MCF 10A (cell line): ENCODE measurements at regions of chr3 and their contacts with region 1.

Region 1: GRCh38 chr3:146189519-146190173 is 28.7 kb upstream of the PLOD2 start:
- DNase-seq: peak; percentile 75
- H3K4me3 Mint-ChIP-seq: peak overlapping the region; percentile 22
- H3K27ac Mint-ChIP-seq: no peak overlapping the region
- H3K4me1 Mint-ChIP-seq: peaks cover 21% of the 10 kb centered on the region
- H3K27me3 Mint-ChIP-seq: no peaks in the 10 kb centered on the region
- CTCF ChIP-seq: peak; percentile 48

Region 2: GRCh38 chr3:146058241-146058640 is 131.4 kb before region 1 on chr3:
- CTCF ChIA-PET with region 1: interaction called, 207 read pairs
- POLR2A ChIA-PET with region 1: interaction called, 3 read pairs
- intact Hi-C with region 1: no loop called
- DNase-seq: no peak
- H3K4me3 Mint-ChIP-seq: no peak overlapping the region
- H3K27ac Mint-ChIP-seq: no peak overlapping the region
- H3K4me1 Mint-ChIP-seq: no peaks in the 10 kb centered on the region
- H3K27me3 Mint-ChIP-seq: no peaks in the 10 kb centered on the region
- CTCF ChIP-seq: no peak

Region 3: DNA sequence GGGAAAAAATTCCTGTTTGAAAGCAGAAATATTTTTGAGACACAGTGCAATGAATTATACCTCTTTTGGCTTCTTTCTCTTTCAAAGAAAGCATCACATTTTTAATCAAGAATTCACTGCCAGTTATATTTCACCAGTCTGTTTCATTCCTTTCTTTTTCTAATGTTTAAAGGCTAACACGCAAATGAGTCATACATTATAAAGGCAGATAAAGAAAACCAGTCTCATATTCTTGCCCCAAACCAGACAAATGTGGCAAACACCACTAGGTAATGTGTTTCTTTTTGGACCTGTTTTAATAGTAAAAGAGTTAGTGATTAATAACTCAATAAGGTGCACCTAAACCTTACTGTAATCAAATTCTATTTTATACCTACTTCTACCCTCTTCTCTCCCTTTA is 112.5 kb before region 1 on chr3:
- CTCF ChIA-PET with region 1: interaction called, 33 read pairs
- POLR2A ChIA-PET with region 1: interaction called, 3 read pairs
- intact Hi-C with region 1: no loop called
- DNase-seq: no peak
- H3K4me3 Mint-ChIP-seq: no peak overlapping the region
- H3K27ac Mint-ChIP-seq: no peak overlapping the region
- H3K4me1 Mint-ChIP-seq: peaks cover 5% of the 10 kb centered on the region
- H3K27me3 Mint-ChIP-seq: no peaks in the 10 kb centered on the region
- CTCF ChIP-seq: no peak

Region 4: DNA sequence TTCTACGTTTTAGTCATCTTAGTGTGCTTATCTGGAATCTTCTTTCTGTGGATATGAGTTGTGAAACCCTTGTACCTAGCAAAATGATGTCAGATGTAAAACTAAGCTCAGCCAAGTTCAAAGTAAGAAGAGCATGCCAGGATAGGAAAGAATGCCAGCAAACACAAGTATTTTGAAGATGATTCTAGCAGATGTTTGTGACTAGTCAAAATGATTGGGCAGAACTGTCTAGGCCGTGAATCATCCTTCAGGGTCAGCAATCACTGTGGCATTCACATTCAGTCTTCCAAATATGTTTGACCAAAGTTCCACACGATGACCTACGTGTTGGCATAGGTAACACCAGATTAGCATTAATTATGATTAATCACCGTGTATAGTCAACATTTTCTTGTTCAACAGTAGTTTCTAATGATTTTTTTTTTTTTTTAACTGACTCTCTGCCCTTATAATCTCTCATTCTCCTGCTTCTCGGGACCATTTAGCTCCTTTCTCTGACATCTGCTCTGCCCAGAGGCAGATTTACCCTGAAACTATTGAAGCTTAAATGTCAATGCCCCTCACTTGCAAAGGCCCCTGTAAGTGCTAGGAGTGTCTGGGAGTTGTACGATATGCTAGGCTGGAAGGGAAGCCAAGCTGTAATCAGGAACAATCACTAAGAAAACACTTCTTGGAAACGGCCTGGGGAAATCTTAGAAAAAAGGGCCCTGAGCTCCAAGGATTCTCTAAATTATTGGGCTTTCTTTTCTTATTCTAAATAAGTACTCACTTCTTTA is 23.0 kb before region 1 on chr3:
- CTCF ChIA-PET with region 1: interaction called, 45 read pairs
- POLR2A ChIA-PET with region 1: interaction called, 26 read pairs
- intact Hi-C with region 1: no loop called
- DNase-seq: peak; percentile 89
- H3K4me3 Mint-ChIP-seq: peak overlapping the region; percentile 15
- H3K27ac Mint-ChIP-seq: peak overlapping the region; percentile 65
- H3K4me1 Mint-ChIP-seq: peaks cover 46% of the 10 kb centered on the region
- H3K27me3 Mint-ChIP-seq: no peaks in the 10 kb centered on the region
- CTCF ChIP-seq: no peak

Region 5: DNA sequence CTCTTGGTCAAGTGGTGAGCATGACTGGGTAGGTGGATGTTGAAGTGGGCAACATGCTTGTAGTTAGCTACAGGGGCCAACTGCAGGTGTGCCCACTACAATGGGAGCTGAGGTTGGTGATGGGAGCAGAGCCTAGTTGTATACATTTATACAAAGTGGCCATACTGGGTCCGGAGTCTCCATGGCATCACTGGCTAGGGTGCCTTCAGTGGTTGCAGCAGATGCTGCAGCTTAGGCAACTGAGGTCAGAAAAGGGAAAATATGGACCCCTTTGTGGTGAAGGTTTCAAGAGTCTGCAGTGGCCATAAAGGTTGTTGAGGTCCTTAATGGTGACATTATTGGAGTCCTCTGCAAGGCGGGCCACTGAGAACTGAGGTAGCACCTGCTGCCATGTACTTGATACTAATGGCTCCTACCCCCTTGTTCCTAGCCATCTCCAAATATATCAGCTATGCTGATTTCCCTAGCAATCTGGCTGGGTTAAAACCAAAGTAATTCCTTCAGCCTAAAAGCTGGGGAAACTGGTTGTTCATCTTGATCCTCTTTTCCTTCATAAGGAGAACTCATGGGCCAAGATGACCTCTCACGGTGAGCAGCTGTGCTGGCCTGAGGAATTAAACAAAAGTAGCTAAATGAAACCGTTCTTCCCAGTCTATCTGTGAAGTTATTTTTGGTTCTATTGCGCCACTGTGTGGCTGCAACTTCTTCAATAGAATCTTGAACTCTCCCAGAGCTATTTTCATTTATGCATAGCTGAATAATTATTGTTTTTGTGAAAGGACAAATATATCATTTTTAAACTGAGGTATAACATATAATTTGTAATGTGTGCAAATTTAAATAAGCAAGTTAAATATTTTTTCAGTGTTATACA is 137.3 kb after region 1 on chr3:
- CTCF ChIA-PET with region 1: interaction called, 177 read pairs
- POLR2A ChIA-PET with region 1: interaction called, 16 read pairs
- intact Hi-C with region 1: loop called (anchors 1 kb)
- DNase-seq: peak; percentile 75
- H3K4me3 Mint-ChIP-seq: no peak overlapping the region
- H3K27ac Mint-ChIP-seq: no peak overlapping the region
- H3K4me1 Mint-ChIP-seq: no peaks in the 10 kb centered on the region
- H3K27me3 Mint-ChIP-seq: no peaks in the 10 kb centered on the region
- CTCF ChIP-seq: peak; percentile 58